ENCODE measurements at regions of chr2 and their contacts with region 1.

Region 1: DNA sequence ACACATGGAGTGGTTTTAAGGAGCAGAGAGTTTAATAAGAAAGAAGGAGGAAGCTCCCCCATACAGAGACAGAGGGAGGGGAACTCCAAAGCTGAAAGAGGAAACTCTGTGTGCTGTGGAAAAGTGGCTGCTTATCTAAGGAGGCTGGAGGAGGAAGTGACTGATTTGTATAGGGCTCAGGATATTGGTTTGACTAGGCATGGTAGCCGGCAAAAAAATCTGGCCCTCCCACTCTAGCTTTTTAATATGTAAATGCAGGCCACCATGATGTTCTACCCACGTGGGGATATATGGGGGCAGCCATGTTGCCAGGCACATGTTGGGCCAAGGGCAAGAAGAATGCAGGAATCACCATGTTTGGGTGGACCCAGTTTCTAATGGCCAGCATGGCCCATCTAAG is 64.3 kb downstream of the HNMT start:
- DNase-seq: peak in 1 of 10 donors; percentile 39

Region 2: GRCh38 chr2:138192096-138192495 is 163.6 kb after region 1 on chr2:
- intact Hi-C with region 1: loop called (anchors 10 kb)
- DNase-seq: no peak

Region 3: GRCh38 chr2:138280999-138281695 is 252.6 kb after region 1 on chr2:
- intact Hi-C with region 1: no loop called
- DNase-seq: no peak

Measured in posterior cingulate gyrus (tissue), 11 donors.